Psoas muscle (tissue), 8 donors: ENCODE measurements at regions of chr20 and their contacts with region 1.

Region 1: DNA sequence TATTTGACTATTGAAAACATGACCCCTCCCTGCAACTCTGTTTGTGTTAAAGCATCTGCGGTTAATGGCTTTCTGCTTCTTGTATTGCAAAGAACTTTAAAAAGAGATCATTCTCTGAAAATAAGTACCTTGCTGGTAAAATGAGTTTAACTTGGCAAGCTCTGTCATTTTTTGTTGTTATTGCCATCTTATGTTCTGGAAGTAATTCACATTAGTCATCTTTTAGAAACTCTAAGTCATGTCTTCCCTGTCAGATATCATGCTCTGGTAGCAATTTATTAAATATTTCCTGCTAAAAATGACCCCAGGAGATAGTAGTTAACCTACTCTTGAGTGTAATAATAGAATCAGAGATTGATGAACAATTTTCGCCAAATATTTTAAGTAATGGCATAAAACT is 890.6 kb downstream of the KIF16B start:
- DNase-seq: no peak
- ATAC-seq: no peak
- H3K4me3 ChIP-seq: no peak overlapping the region
- H3K27ac ChIP-seq: no peak overlapping the region
- H3K4me1 ChIP-seq: no peaks in the 10 kb centered on the region
- H3K27me3 ChIP-seq: no peaks in the 10 kb centered on the region
- CTCF ChIP-seq: no peak

Region 2: DNA sequence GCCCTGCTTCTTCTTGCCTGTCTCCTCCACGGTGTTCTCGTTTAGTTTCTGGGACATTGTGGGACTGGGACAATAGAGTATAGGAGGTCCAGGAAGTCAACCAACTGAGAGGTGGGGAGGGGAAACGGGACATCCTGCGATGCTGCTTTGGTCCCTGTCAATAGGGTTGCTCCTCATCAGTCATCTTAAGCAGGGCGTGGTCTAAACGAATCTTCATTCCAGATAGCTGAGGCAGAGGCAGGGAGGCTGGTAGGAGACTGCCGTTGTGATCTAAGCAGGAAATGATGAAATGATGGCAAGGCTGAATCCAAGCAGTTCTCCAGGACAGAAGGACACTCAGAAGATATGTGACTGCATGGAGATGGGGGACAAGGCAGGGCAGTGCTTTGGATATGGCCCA is 62.9 kb before region 1 on chr20:
- intact Hi-C with region 1: loop called in 1 of 2 experiments (anchors 10 kb)
- DNase-seq: no peak
- ATAC-seq: no peak
- H3K4me3 ChIP-seq: no peak overlapping the region
- H3K27ac ChIP-seq: no peak overlapping the region
- H3K4me1 ChIP-seq: no peaks in the 10 kb centered on the region
- H3K27me3 ChIP-seq: no peaks in the 10 kb centered on the region
- CTCF ChIP-seq: no peak

Region 3: GRCh38 chr20:15742087-15742486 is 59.4 kb after region 1 on chr20:
- intact Hi-C with region 1: no loop called
- DNase-seq: no peak
- ATAC-seq: no peak
- H3K4me3 ChIP-seq: no peak overlapping the region
- H3K27ac ChIP-seq: no peak overlapping the region
- H3K4me1 ChIP-seq: no peaks in the 10 kb centered on the region
- H3K27me3 ChIP-seq: no peaks in the 10 kb centered on the region
- CTCF ChIP-seq: no peak